ENCODE measurements at regions of chr1 and their contacts with region 1.

Region 1: DNA sequence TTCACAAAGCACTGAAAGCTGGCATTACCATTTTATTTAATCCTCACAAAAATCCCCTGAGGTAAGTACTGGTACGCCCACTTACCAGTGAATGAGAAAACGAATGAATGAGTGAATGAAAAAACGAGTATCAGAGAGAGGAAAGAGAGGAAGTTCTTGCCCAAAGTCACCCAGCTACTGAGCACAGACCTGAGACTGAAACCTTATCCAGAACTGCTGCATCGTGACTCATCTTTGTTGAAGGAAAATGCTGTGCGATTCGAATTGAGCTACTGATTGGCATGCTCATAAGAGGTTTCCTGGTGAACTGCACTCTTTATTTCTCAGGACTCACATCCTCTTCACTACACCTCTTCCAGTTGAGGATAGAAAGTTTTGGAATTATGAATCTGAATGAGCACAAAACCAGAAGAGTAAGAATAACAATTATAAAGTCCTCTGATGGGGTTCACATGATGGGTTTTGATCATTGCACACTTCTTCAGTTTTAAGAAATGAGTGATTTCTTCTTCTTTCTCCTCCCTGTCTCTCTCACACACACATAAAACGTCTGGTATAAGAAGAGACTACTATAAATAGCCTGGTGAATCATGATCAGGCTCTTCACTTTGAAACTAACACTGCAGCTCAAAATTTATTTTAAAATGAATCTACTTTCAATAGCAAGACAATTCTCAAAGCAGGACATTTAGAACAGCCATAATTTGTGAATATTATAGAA is 32.1 kb downstream of the IL12RB2 start:
- DNase-seq: peak; percentile 50
- ATAC-seq: peak; percentile 43
- H3K4me3 Mint-ChIP-seq: peak overlapping the region; percentile 1
- H3K27ac Mint-ChIP-seq: peak overlapping the region; percentile 69
- H3K4me1 Mint-ChIP-seq: peaks cover 82% of the 10 kb centered on the region
- H3K27me3 Mint-ChIP-seq: no peaks in the 10 kb centered on the region

Region 2: DNA sequence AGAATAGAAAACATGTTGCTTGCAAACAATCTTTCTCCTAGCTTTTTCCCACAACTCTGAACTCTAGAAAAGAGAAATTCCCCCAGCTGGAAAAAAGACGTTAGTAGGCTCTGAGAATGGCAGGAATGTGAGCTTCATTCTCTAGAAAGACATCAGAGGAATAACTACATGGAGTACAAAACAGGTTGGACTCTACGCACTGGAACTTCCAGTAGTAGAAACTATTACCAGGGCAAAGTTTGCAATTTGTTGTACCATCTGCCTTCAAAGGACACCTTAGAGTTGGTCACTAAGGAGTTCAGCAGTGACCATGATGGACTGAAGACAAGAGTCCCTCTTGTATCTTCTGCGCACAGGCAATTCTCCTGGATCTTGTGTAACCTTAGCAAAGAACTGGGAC is 346.7 kb before region 1 on chr1:
- CTCF ChIA-PET with region 1: no interaction called
- POLR2A ChIA-PET with region 1: no interaction called
- DNase-seq: no peak
- ATAC-seq: no peak
- H3K4me3 Mint-ChIP-seq: no peak overlapping the region
- H3K27ac Mint-ChIP-seq: no peak overlapping the region
- H3K4me1 Mint-ChIP-seq: peaks cover 9% of the 10 kb centered on the region
- H3K27me3 Mint-ChIP-seq: no peaks in the 10 kb centered on the region

Region 3: DNA sequence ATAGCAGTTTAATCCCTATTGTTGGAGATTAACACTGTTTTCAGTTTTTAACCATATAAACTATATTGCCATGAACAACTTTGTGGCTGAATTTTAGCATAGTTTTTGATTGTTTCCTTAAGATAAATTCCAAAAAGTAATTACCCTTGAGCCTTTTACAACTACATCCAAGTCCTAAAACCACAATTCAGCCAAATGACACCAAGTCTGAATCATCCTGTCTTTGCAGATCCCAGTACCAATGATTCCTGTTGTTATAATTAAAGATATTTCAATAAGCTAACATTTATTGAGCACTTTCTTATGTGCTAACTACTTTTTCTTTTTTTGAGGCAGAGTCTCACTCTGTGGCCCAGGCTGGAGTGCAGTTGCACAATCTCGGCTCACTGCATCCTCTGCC is 137.9 kb before region 1 on chr1:
- CTCF ChIA-PET with region 1: no interaction called
- POLR2A ChIA-PET with region 1: no interaction called
- DNase-seq: no peak
- ATAC-seq: no peak
- H3K4me3 Mint-ChIP-seq: no peak overlapping the region
- H3K27ac Mint-ChIP-seq: no peak overlapping the region
- H3K4me1 Mint-ChIP-seq: peaks cover 3% of the 10 kb centered on the region
- H3K27me3 Mint-ChIP-seq: peaks cover 3% of the 10 kb centered on the region

Region 4: GRCh38 chr1:67323087-67323486 is 16.7 kb before region 1 on chr1:
- CTCF ChIA-PET with region 1: interaction called, 11 read pairs
- POLR2A ChIA-PET with region 1: no interaction called
- DNase-seq: no peak
- ATAC-seq: peak; percentile 44
- H3K4me3 Mint-ChIP-seq: no peak overlapping the region
- H3K27ac Mint-ChIP-seq: no peak overlapping the region
- H3K4me1 Mint-ChIP-seq: peaks cover 11% of the 10 kb centered on the region
- H3K27me3 Mint-ChIP-seq: no peaks in the 10 kb centered on the region